ENCODE measurements at regions of chr16 and their contacts with region 1.

Region 1: DNA sequence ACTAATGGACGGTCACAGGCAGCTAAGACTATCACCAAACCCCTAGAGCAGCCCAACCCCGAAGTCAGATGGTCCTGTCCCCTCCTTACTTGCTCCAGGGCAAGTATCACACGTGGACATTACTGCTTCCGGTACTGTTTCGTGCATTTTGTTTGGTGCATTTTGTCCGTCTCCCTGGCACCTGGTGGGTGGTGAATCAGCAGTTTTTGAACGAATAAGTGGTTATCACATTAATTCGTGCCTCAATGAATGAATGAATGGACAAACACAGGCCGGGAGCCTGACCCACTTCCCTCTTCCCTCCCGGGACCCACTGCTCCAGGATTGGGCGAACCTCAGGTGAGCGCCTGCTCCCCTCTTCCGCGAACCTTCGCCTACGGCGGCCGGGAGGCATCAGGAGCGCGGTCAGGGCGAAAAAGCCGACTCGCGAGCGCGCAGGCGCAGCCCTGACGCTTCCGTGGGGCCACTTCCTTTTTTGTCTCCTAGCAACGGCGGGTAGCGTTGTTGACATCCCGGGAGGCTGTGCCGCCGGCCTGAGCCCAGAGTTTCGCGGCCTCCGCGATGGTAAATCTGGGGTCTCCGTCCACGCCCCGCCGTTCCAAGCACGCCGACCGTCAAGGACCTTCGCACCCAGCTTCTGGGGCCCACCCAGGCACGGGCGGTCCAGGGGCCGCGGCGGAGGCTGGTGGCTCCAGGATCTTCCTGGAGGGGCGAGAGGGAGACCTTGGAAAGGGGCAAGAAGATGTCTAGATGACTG is at the start of gene DYNLRB2:
- DNase-seq: peak; percentile 96
- ATAC-seq: peak; percentile 89
- H3K4me3 ChIP-seq: peak within 1 kb of the TSS; percentile 59 to 85 (median 73)
- H3K4me3 Mint-ChIP-seq: peak within 1 kb of the TSS; percentile 97
- H3K27ac ChIP-seq: peak within 1 kb of the TSS; percentile 54 to 84
- H3K27ac Mint-ChIP-seq: peak within 1 kb of the TSS; percentile 98
- H3K4me1 ChIP-seq: peaks cover 8 to 11% of the 10 kb centered on the region in 2 donors
- H3K4me1 Mint-ChIP-seq: peaks cover 14% of the 10 kb centered on the region
- H3K27me3 ChIP-seq: peaks cover 0 to 6% (median 0%) of the 10 kb centered on the region in 4 experiments
- H3K27me3 Mint-ChIP-seq: peaks cover 12% of the 10 kb centered on the region
- CTCF ChIP-seq: no peak
- total RNA-seq, gene DYNLRB2: not detected in 2 replicates

Region 2: DNA sequence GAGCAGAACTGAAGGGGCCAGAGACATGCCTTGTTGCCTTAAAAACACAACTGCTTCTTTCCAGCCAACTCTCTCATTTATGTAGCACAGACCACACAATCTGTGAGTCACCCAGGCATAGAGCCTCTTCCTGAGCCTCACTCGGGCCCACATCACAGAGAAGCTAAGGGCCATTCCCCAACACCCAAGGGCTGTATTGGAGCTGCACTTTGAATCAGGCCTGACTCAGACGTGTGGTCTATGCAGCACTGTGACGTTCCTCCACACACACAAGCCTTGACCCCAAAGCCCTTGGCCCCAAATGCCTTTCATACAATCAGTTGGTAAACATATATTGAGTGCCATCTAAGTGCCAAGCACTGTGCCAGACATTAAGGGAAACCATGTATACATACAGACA is 308.8 kb before region 1 on chr16:
- CTCF ChIA-PET with region 1: no interaction called
- POLR2A ChIA-PET with region 1: no interaction called
- intact Hi-C with region 1: no loop called
- DNase-seq: no peak
- ATAC-seq: no peak
- H3K4me3 ChIP-seq: no peak overlapping the region
- H3K4me3 Mint-ChIP-seq: no peak overlapping the region
- H3K27ac ChIP-seq: no peak overlapping the region
- H3K27ac Mint-ChIP-seq: no peak overlapping the region
- H3K4me1 ChIP-seq: peaks cover 0 to 16% of the 10 kb centered on the region in 2 donors
- H3K4me1 Mint-ChIP-seq: peaks cover 10% of the 10 kb centered on the region
- H3K27me3 ChIP-seq: no peaks in the 10 kb centered on the region
- H3K27me3 Mint-ChIP-seq: no peaks in the 10 kb centered on the region
- CTCF ChIP-seq: no peak

Region 3: GRCh38 chr16:80466024-80466987 is 74.4 kb before region 1 on chr16:
- CTCF ChIA-PET with region 1: no interaction called
- POLR2A ChIA-PET with region 1: no interaction called
- intact Hi-C with region 1: no loop called
- DNase-seq: peak; percentile 85
- ATAC-seq: peak; percentile 88
- H3K4me3 ChIP-seq: peak overlapping the region in 2 of 5 experiments; percentile 21 to 34
- H3K4me3 Mint-ChIP-seq: peak overlapping the region; percentile 23
- H3K27ac ChIP-seq: no peak overlapping the region
- H3K27ac Mint-ChIP-seq: peak overlapping the region; percentile 0
- H3K4me1 ChIP-seq: peaks cover 12 to 15% of the 10 kb centered on the region in 2 donors
- H3K4me1 Mint-ChIP-seq: peaks cover 12% of the 10 kb centered on the region
- H3K27me3 ChIP-seq: peaks cover 0 to 17% (median 4%) of the 10 kb centered on the region in 4 experiments
- H3K27me3 Mint-ChIP-seq: peaks cover 48% of the 10 kb centered on the region
- CTCF ChIP-seq: peak; percentile 76

Region 4: DNA sequence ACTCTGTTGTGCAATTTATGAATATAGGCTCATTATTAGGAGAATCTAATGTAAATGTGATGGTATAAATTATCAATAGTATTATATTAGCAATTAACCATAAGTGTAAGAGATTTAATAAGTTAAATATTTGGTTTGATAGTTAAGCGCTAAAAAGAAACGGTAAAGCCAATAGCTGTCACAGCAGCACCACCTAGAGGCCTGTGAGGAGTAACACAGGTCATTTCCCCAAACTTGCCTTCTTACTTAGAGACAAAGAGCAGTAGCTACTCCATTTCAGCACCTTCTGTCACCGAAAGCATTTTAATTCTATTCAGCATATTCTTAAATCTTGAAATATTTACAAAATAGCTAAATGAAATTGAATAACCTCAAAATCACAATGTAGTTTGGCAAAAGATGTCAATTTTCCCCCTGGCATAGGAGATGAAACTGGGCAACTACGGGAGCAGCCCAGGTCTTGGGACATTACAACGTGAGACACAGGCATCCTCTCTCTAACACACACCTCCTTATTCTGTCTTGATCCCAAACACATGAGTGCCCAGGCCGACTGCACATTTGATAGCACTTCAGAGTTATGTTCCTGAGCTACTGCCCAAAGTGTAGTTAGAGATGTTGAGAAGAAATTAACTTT is 14.2 kb before region 1 on chr16:
- CTCF ChIA-PET with region 1: interaction called, 28 read pairs
- POLR2A ChIA-PET with region 1: no interaction called
- intact Hi-C with region 1: no loop called
- DNase-seq: peak; percentile 71
- ATAC-seq: peak; percentile 75
- H3K4me3 ChIP-seq: no peak overlapping the region
- H3K4me3 Mint-ChIP-seq: no peak overlapping the region
- H3K27ac ChIP-seq: no peak overlapping the region
- H3K27ac Mint-ChIP-seq: no peak overlapping the region
- H3K4me1 ChIP-seq: no peaks in the 10 kb centered on the region
- H3K4me1 Mint-ChIP-seq: peaks cover 1% of the 10 kb centered on the region
- H3K27me3 ChIP-seq: no peaks in the 10 kb centered on the region
- H3K27me3 Mint-ChIP-seq: peaks cover 4% of the 10 kb centered on the region
- CTCF ChIP-seq: peak; percentile 94

Region 5: DNA sequence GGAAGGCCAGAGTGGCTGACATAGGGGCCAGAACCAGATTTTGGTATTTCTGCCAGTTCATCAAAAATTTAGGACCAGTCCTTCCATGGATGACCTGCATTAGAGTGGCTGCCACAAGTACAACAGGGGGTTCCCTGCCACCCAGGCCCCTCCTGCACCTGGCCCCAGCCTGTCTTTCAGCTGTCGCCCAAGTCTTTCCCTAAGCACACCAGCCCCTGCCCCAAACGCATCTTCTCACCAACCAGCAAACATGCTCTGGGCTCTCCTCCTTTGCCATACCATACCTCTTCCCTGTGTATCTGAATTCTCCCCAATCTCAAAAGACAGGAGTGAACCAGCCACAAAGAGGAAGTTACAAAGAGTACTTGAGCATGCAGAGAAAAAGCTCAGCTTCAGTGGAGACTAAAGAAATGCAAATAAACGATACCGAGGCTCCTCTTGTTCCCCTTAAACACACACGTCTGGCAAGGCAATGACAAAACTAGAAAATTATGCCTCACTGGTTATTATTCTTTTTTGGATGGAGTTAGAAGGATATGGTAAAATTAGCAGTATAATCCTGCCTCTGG is 130.7 kb after region 1 on chr16:
- CTCF ChIA-PET with region 1: no interaction called
- POLR2A ChIA-PET with region 1: no interaction called
- intact Hi-C with region 1: loop called (anchors 5 kb)
- DNase-seq: peak; percentile 76
- ATAC-seq: peak; percentile 66
- H3K4me3 ChIP-seq: peak overlapping the region in 1 of 5 experiments; percentile 11
- H3K4me3 Mint-ChIP-seq: peak overlapping the region; percentile 56
- H3K27ac ChIP-seq: no peak overlapping the region
- H3K27ac Mint-ChIP-seq: peak overlapping the region; percentile 47
- H3K4me1 ChIP-seq: peaks cover 46 to 51% of the 10 kb centered on the region in 2 donors
- H3K4me1 Mint-ChIP-seq: peaks cover 59% of the 10 kb centered on the region
- H3K27me3 ChIP-seq: peaks cover 0 to 18% (median 4%) of the 10 kb centered on the region in 4 experiments
- H3K27me3 Mint-ChIP-seq: peaks cover 12% of the 10 kb centered on the region
- CTCF ChIP-seq: no peak

Region 6: GRCh38 chr16:80804056-80804450 is 263.4 kb after region 1 on chr16:
- CTCF ChIA-PET with region 1: no interaction called
- POLR2A ChIA-PET with region 1: no interaction called
- intact Hi-C with region 1: loop called (anchors 5 kb)
- DNase-seq: peak; percentile 69
- ATAC-seq: peak; percentile 44
- H3K4me3 ChIP-seq: peak overlapping the region in 4 of 5 experiments; percentile 41 to 66 (median 57)
- H3K4me3 Mint-ChIP-seq: peak overlapping the region; percentile 97
- H3K27ac ChIP-seq: no peak overlapping the region
- H3K27ac Mint-ChIP-seq: peak overlapping the region; percentile 82
- H3K4me1 ChIP-seq: peaks cover 5 to 6% of the 10 kb centered on the region in 2 donors
- H3K4me1 Mint-ChIP-seq: peaks cover 7% of the 10 kb centered on the region
- H3K27me3 ChIP-seq: peaks cover 0 to 28% (median 10%) of the 10 kb centered on the region in 4 experiments
- H3K27me3 Mint-ChIP-seq: peaks cover 12% of the 10 kb centered on the region
- CTCF ChIP-seq: no peak

Region 7: GRCh38 chr16:80894091-80894490 is 353.4 kb after region 1 on chr16:
- CTCF ChIA-PET with region 1: no interaction called
- POLR2A ChIA-PET with region 1: no interaction called
- intact Hi-C with region 1: loop called (anchors 5 kb)
- DNase-seq: no peak
- ATAC-seq: no peak
- H3K4me3 ChIP-seq: no peak overlapping the region
- H3K4me3 Mint-ChIP-seq: no peak overlapping the region
- H3K27ac ChIP-seq: no peak overlapping the region
- H3K27ac Mint-ChIP-seq: no peak overlapping the region
- H3K4me1 ChIP-seq: peaks cover 0 to 9% of the 10 kb centered on the region in 2 donors
- H3K4me1 Mint-ChIP-seq: peaks cover 21% of the 10 kb centered on the region
- H3K27me3 ChIP-seq: no peaks in the 10 kb centered on the region
- H3K27me3 Mint-ChIP-seq: no peaks in the 10 kb centered on the region
- CTCF ChIP-seq: no peak